Cardiac septum (tissue), 1 donor: ENCODE measurements at regions of chr20 and their contacts with region 1.

Region 1: DNA sequence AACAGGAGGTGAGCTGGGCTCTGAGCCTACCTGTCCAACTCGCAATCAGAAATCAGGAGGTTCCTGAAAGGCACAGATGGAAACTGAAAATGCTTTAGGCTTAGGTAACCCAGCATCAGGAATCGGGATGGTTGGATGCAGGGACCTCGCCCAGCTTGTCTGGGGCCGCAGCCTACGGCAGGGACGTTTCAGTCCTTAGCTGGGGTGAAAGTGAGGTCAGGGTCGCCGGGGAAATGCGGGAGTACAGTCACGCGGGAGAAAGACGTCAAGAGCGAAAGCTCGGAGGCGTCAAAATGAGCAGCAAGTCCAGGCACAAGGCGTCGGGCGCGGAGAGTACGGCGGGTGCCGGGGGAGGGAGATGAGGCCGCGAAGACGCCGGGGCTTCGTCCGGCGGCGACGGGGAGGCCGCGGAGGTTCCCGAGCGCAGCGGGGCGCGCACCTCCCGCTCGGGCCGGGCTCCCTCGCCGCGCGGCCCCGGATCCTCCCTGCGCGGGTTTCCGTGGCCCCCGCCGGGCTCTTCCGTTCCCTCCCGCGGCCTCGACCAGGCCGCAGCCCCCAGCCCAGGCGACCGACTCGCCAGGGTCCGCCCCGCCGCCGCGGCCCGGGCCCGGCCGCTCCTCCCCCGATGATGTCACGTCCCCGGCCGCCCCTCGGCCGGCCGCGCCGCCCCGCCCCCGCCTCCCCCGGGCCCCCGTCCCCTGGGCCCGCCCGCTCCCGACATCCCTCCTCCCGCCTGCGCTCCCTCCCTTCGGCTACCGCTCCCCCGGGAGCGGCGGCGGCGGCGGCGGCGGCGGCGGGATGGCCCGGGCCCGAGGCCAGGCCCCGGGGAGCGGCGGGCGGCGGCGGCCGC is at the start of gene EBF4:
- DNase-seq: no peak
- total RNA-seq, gene EBF4: 4.8 TPM

Region 2: DNA sequence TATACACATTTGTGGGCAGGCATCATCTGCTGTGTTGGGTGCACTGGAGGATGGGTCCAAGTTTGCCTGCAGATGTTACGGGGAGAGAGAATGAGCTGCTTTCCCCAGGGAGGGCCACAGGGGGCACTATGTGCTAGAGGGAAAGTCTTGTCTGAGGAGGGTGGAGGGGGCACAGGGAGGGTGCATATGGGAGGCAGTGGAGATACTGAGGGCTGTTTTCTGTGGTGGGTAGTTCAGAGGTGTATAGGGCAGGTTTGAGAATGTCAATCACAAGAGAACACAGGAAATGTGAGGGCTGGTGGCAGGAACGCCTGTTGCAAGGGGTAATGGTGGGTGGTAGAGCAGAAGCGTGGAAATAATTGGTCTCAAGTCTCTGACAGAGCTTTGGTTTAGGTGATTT is 173.4 kb after region 1 on chr20:
- intact Hi-C with region 1: loop called (anchors 10 kb)
- DNase-seq: no peak